Esophagus squamous epithelium (tissue), 5 donors: ENCODE measurements at regions of chr19 and their contacts with region 1.

Region 1: GRCh38 chr19:12983542-12984142 is 11.6 kb upstream of the NFIX start:
- DNase-seq: no peak
- H3K4me3 ChIP-seq: peak overlapping the region in 3 of 4 donors; percentile 14 to 50 (median 36)
- H3K27ac ChIP-seq: peak overlapping the region in 1 of 4 donors; percentile 2
- H3K4me1 ChIP-seq: peaks cover 0 to 22% (median 0%) of the 10 kb centered on the region in 3 donors
- H3K27me3 ChIP-seq: no peaks in the 10 kb centered on the region
- CTCF ChIP-seq: peak; percentile 88 to 100 (median 99)
- POLR2A ChIP-seq: no peak

Region 2: DNA sequence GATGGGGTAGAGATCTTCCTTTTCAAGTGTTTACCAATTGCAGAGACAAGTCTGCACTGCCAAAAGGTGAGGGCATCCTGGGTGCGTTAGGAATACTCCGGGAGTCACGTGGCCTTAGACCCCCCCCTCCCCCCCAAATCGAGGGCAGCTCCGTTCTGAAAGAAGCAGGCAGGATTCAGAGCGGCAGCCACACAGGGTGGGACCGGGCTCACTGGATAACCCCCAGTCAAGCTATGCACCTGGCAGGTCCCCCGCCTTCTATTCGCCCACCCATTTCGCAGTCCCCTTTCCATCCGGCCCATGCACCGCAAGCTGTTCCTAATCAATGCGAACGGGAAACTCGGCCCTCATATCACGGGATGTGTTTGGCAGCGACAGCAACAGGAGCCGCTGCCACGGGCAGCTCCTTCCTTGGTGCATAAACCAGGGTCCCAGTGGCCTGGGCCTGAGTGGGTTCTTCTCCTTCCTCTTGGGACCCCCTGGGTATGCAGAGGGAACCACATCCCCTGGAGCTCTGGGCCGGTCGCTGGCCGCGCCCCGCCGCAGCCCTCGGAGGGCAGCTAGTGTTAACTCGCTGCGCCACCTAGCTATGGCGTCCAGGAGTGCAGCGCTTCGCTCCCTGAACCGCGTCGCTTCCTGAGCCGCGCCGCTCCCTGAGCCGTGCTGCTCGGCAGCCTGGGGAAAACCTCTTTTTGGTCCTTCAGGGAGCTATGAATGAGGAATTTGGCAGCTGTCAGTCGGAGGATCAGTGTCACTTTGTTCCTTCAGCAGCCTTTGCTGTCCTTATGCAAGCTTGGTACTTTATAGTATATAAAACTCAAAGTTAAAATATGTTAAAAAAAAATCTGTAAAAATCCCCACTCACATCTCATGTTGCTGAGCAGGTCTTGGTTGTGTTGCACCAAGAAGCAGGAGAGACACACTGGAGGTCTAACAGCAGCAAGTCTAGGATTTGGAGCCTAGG is 77.6 kb after region 1 on chr19:
- intact Hi-C with region 1: loop called (anchors 5 kb)
- DNase-seq: peak; percentile 17
- H3K4me3 ChIP-seq: peak overlapping the region; percentile 15 to 69 (median 44)
- H3K27ac ChIP-seq: peak overlapping the region; percentile 51 to 96 (median 90)
- H3K4me1 ChIP-seq: peaks cover 59 to 100% (median 86%) of the 10 kb centered on the region in 3 donors
- H3K27me3 ChIP-seq: no peaks in the 10 kb centered on the region
- CTCF ChIP-seq: peak; percentile 94 to 97 (median 96)
- POLR2A ChIP-seq: no peak

Region 3: GRCh38 chr19:13093407-13094105 is 109.9 kb after region 1 on chr19:
- intact Hi-C with region 1: loop called (anchors 5 kb)
- DNase-seq: no peak
- H3K4me3 ChIP-seq: no peak overlapping the region
- H3K27ac ChIP-seq: peak overlapping the region; percentile 30 to 94 (median 88)
- H3K4me1 ChIP-seq: peaks cover 34 to 97% (median 63%) of the 10 kb centered on the region in 3 donors
- H3K27me3 ChIP-seq: peaks cover 0 to 9% (median 0%) of the 10 kb centered on the region in 4 donors
- CTCF ChIP-seq: peak; percentile 88 to 95 (median 94)
- POLR2A ChIP-seq: no peak